BJ (cell line): ENCODE measurements at regions of chr1 and their contacts with region 1.

Region 1: GRCh38 chr1:112882271-112882744 is 73.7 kb downstream of the SLC16A1 start:
- DNase-seq: no peak
- H3K4me3 ChIP-seq: no peak overlapping the region
- H3K27me3 ChIP-seq: no peaks in the 10 kb centered on the region
- CTCF ChIP-seq: no peak

Region 2: DNA sequence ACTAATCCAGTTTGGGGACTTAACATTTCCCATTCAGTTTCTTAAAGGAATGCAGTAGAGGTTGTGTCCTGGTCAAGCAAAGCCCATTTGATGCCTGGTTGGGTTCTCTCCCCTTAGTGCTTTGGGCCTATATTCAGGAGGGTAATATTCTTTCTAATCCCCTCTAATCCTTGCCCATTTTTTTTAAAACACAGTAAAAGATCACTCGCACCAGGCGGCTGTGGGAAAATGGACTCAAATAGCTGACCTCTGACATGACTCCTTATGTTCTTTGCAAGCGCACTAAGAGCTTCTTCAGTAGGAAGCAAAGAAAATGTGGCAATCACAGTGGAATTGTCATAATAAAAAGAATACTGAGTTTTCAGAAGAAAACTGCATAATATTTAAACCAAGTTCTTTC is 323.7 kb before region 1 on chr1:
- CTCF ChIA-PET with region 1: no interaction called
- POLR2A ChIA-PET with region 1: no interaction called
- DNase-seq: no peak
- H3K4me3 ChIP-seq: no peak overlapping the region
- H3K27me3 ChIP-seq: no peaks in the 10 kb centered on the region
- CTCF ChIP-seq: no peak

Region 3: DNA sequence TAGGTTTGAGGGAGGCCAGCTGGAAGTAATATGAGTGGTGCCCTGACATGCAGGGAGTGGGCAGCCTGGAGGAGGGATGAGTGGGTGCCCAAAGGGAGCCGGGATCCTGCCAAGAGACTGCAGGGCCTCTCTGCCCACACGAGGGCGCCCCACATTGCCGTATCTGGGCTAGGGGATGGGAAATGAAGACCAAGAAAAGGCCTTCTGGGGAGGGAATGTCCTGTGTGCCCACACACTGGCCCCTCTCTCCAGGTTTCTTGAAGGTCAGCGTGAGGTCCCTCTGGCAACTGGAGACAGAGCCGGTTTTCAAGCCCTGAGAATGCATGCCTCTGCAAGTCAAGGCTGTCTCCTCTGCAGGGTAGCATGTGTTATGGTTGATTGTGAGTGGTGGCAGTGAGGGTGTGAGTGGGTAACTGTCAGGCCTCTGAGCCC is 73.0 kb before region 1 on chr1:
- CTCF ChIA-PET with region 1: interaction called, 15 read pairs
- POLR2A ChIA-PET with region 1: no interaction called
- DNase-seq: no peak
- H3K4me3 ChIP-seq: no peak overlapping the region
- H3K27me3 ChIP-seq: 0 out of 2 replicates have a peak, but pooled peaks cover 4% of the 10 kb centered on the region
- CTCF ChIP-seq: peak; percentile 98

Region 4: DNA sequence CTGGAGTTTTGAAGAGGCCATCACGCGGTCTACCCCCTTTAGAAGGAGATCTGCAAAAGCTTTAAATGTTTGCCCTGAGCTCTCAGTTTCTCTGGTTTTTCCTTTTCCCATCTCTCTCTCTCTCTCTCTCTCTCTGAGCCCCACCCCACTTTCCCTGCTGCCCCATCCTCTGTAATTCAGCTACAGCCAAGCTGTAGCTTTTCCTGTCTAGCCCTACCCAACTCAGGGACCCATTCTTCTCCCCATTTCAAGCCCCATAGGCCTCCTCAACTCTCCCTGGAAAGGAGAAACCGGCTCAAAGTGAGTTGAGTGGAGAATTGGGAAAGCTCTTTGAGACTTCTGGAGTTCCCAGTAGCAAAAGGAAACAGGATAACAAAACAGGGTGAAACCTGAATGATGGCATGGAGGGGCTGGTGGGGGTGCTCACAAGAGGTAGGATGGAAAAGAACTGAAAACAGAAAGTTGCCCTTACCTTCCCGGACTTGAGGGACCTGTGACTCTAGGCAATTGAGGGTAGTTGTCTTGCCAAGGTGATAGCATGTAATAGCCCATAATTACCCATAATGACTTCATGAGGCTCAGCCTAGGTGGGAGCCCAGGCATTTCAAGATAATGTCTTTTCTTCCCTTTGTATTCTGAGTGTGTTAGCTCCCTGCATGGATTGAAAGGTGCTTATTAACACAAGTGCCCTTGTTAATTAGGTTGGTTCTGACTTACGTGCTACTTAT is 11.3 kb before region 1 on chr1:
- CTCF ChIA-PET with region 1: interaction called, 10 read pairs
- POLR2A ChIA-PET with region 1: no interaction called
- DNase-seq: no peak
- H3K4me3 ChIP-seq: no peak overlapping the region
- H3K27me3 ChIP-seq: no peaks in the 10 kb centered on the region
- CTCF ChIP-seq: no peak

Region 5: GRCh38 chr1:112893288-112894009 is 11.1 kb after region 1 on chr1:
- CTCF ChIA-PET with region 1: interaction called, 10 read pairs
- POLR2A ChIA-PET with region 1: no interaction called
- DNase-seq: no peak
- H3K4me3 ChIP-seq: no peak overlapping the region
- H3K27me3 ChIP-seq: no peaks in the 10 kb centered on the region
- CTCF ChIP-seq: no peak

Region 6: DNA sequence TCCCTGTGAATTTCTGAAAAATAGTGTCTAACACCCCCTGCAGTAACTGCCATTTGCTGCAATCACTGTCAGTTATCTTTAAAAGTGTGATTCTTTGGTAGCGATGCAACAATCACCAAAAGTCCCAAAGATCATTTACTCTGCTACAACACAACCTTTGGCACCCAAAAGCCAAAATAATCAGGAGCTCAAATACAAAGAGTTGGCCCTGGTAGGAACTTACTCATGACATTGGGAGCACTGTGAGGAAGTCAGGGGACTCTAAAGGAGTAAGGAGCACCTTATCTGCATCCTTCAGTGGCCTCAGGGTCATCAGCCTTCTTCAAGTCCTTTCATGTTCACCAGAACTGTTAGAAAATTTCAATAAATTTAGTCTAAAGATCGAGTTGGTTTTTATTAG is 19.1 kb after region 1 on chr1:
- CTCF ChIA-PET with region 1: interaction called, 11 read pairs
- POLR2A ChIA-PET with region 1: no interaction called
- DNase-seq: no peak
- H3K4me3 ChIP-seq: no peak overlapping the region
- H3K27me3 ChIP-seq: no peaks in the 10 kb centered on the region
- CTCF ChIP-seq: no peak

Region 7: DNA sequence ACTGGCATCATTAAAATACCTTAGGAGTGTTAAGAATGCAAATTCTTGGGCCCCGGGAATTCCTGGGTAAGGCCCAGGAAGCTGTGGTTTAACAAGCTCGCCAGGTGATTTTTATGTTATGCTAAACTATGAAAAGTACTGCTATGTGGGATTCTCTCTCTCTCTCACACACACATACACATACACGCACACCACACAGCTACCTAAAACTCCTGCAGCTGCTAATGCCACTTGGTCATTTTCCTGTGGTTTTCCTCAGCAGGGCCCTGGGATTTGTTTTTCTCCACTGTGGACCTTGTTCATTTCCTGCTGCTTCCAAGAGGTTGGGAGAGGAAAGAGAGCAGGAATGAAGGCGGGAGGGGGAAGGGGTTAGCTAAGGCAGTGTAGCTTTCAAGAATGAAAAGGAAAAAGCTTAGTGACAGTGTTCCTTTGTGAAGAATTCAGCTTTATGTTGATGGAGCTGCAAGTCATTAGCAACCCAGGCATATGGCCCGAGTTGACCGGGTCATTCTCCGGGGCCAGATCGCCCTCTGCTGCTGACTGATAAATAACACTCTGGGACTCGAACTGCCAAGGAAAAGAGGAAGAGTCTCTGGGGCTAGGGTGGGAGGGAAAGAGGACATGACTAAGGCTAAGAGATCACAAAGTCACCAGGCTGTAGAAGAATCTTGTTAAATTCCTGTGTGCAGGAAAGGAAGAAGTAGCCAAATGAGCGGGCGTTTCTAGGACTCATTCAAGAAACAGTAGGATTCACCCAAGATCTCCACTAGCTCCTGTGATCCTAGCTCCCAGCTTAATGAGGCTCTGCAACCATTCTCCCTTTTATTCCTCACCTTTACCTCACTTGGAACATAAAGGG is 160.2 kb after region 1 on chr1:
- CTCF ChIA-PET with region 1: interaction called, 132 read pairs
- POLR2A ChIA-PET with region 1: no interaction called
- DNase-seq: peak; percentile 57
- H3K4me3 ChIP-seq: no peak overlapping the region
- H3K27me3 ChIP-seq: no peaks in the 10 kb centered on the region
- CTCF ChIP-seq: peak; percentile 67